ENCODE measurements at regions of chr3 and their contacts with region 1.

Region 1: GRCh38 chr3:50184242-50184978 is 7.0 kb upstream of the GNAT1 start:
- DNase-seq: no peak
- H3K4me3 ChIP-seq: no peak overlapping the region
- CTCF ChIP-seq: no peak

Region 2: DNA sequence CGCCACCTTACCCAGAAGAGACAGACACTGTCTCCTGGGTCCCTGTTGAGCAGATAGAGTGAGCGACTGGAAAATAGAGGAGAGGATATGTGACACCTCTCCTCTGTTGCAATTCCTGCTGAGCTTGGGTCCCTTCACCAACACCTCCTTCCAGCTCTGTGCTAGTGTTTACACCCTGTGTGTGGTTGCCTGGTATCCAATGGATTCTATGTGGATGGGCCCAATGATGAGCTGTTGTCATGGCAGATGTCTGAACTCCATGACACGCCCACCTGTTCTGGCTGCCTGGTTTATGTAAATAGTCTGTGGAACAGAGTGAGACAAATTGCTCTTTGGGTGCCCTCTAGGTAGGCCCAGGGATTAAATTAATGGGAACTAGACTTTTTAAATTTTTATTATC is 71.9 kb before region 1 on chr3:
- in situ Hi-C with region 1: loop called (anchors 5 kb)
- DNase-seq: no peak
- H3K4me3 ChIP-seq: no peak overlapping the region
- CTCF ChIP-seq: no peak

Measured in astrocyte of the cerebellum (primary cell).